Right cardiac atrium (tissue), 5 donors: ENCODE measurements at regions of chr16 and their contacts with region 1.

Region 1: GRCh38 chr16:86563489-86564345 is 2.9 kb upstream of the FOXC2 start:
- DNase-seq: peak; percentile 85 to 95 (median 91)
- ATAC-seq: peak; percentile 67 to 76
- H3K4me3 ChIP-seq: no peak overlapping the region
- H3K27ac ChIP-seq: no peak overlapping the region
- H3K4me1 ChIP-seq: no peaks in the 10 kb centered on the region
- H3K27me3 ChIP-seq: no peaks in the 10 kb centered on the region

Region 2: DNA sequence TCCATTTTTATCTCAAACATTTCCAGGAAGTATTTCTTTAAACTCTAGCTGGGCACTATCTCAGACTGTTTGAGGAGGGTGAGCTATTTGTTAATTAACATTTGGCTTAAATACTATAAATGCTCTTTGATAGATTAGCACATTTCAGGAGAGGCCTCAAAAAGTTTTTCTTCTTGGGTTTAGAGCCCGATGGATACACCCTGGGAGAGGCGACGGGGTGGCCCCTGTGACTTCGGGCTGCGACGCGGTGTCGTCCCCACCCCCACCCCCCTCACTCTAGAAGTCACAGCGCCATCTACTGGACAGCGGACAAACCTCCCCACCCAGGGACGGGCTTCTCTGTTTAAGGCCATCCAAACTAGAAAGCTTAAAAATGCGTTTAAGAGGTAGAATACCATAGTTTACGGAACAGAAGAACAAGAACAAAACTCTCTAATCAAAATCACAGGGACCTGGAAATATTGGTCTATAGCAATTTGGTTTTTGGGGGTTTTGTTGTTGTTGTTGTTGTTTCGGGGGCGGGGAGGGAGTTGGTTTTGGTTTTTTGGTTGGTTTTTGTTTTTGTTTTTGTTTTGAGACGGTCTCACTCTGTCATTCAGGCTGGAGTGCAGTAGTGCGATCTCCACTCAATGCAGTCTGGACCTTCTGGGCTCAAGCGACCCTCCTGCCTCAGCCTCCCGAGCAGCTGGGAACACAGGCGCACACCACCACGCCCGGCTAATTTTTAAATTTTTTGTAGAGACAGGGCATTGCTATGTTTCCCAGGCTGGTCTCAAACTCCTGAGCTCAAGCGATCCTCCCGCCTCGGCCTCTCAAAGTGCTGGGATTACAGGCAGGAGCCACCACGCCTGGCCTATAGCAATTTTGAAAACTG is 499.1 kb after region 1 on chr16:
- intact Hi-C with region 1: loop called (anchors 2 to 5 kb)
- DNase-seq: peak; percentile 72 to 91 (median 88)
- ATAC-seq: peak; percentile 92
- H3K4me3 ChIP-seq: no peak overlapping the region
- H3K27ac ChIP-seq: no peak overlapping the region
- H3K4me1 ChIP-seq: no peaks in the 10 kb centered on the region
- H3K27me3 ChIP-seq: no peaks in the 10 kb centered on the region